Activated CD4-positive, alpha-beta memory T cell treated with anti-CD3 and anti-CD28 coated beads for 36 hours (primary cell): ENCODE measurements at regions of chr17 and their contacts with region 1.

Region 1: DNA sequence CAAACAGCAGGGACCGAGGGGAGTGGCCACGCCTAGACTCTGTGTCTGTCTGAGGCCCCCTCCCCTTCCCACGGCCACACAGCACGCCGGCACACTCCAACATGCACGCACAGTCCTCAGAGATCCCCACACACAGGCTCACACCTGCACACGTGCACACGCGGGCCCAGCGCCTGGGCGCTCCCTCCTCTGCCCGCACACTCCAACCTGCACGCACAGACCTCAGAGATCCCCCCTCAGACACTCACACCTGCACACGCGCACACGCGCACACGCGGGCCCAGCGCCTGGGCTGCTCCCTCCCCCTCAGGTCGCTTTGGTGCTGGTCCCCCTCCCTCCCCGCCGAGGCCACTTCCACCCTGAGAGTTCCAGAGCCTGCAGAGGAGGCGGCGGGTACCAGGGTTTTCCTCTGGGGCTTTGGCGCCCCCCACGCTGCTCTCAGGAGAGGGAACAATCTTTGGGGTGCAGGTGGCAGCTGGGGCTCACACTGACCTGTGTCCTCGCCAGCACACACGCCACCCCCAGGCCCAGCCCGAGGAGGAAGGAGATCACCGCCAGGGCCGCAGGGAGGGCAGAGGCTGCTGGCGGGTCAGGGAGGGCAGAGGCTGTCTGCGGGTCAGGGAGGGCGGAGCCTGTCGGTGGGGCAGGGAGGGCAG is 1.6 kb downstream of the CD7 start:
- DNase-seq: peak; percentile 64
- H3K4me3 Mint-ChIP-seq: no peak overlapping the region
- H3K27ac Mint-ChIP-seq: peak overlapping the region; percentile 92
- H3K4me1 Mint-ChIP-seq: peaks cover 19% of the 10 kb centered on the region
- H3K27me3 Mint-ChIP-seq: no peaks in the 10 kb centered on the region

Region 2: DNA sequence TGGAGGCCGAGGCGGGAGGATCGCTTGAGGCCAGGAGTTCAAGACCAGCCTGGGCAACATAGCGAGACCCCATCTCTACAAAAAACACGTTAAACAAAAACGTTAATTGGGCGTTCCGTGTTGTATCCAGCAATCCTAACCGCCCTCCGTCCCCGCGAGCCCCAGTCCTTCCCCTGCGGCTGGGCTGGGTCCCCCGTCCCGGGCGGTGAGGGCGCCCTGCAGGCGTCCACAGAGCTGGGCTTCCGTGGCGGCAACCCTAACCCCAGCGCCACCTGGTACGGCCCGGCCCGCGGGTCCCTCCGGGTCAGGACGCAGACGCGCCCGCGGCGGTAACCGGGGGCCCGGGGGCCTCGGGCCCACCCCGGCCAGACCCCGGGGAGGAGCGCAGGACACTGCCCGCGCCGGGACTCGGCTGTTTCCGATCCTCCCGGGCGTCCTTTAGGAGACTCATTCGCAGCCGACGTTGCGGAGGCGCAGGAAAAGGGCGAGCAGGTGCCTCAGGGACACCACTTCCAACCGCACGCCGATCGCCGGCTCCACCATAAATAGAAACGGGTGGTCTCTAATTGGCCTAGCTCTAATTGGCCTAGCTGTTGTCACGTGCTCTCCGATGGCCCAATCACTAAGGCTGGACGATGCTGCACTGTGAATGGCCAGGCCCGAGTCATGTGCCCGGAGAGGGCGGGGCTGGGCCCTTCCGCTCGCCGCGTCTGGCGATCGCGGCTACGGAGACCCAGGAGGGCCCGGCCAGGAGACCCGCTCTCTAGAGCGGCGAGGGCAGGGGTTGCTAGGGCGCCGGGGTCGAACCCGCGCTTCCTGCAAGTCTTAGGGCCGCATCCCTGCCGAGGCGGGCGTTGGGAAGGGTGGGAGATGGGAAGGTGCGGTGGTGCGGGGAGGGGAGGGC is 23.3 kb before region 1 on chr17:
- CTCF ChIA-PET with region 1: interaction called, 113 read pairs
- POLR2A ChIA-PET with region 1: interaction called, 103 read pairs
- intact Hi-C with region 1: no loop called
- DNase-seq: peak; percentile 96
- H3K4me3 Mint-ChIP-seq: peak overlapping the region; percentile 82
- H3K27ac Mint-ChIP-seq: peak overlapping the region; percentile 87
- H3K4me1 Mint-ChIP-seq: peaks cover 49% of the 10 kb centered on the region
- H3K27me3 Mint-ChIP-seq: no peaks in the 10 kb centered on the region

Region 3: GRCh38 chr17:82303944-82304808 is 11.7 kb before region 1 on chr17:
- CTCF ChIA-PET with region 1: interaction called, 113 read pairs
- POLR2A ChIA-PET with region 1: interaction called, 103 read pairs
- intact Hi-C with region 1: loop called (anchors 1 kb)
- DNase-seq: peak; percentile 11
- H3K4me3 Mint-ChIP-seq: peak overlapping the region; percentile 93
- H3K27ac Mint-ChIP-seq: peak overlapping the region; percentile 100
- H3K4me1 Mint-ChIP-seq: peaks cover 77% of the 10 kb centered on the region
- H3K27me3 Mint-ChIP-seq: no peaks in the 10 kb centered on the region